ENCODE measurements at regions of chr1 and their contacts with region 1.

Region 1: DNA sequence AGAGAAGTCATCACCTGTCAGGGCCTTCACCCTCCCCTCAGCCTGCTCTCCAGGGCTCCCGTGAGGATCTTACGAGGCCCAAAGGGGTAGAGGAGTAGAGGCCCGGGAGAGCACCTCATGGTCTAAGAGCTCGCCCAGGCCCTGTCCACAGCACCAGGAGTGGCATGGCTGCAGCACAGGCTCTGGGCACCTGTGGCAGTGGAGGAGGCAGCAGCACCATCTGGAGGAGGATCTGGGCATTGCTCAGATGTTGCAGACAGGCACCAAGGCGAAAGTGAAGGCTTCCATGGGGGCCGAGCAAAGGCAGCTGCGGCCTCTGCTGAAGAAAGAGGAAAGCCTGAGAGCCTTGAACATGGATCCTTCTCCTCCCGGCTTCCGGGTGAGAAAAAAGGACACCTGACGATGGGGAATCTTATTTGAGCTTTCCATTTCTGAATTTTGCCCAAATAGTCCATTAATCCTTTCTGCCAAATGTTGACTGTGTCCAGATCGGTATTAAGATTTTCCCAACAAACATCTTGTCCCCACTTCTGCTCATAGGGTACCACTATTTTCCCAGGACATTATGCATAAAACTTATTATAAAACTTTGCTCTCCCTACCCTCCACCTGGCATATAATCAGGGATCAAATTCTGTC is 604.7 kb downstream of the PTPRC start:
- DNase-seq: peak; percentile 71
- H3K4me3 Mint-ChIP-seq: no peak overlapping the region
- H3K27ac Mint-ChIP-seq: no peak overlapping the region
- H3K4me1 Mint-ChIP-seq: peaks cover 6% of the 10 kb centered on the region
- H3K27me3 Mint-ChIP-seq: no peaks in the 10 kb centered on the region
- CTCF ChIP-seq: peak; percentile 90

Region 2: DNA sequence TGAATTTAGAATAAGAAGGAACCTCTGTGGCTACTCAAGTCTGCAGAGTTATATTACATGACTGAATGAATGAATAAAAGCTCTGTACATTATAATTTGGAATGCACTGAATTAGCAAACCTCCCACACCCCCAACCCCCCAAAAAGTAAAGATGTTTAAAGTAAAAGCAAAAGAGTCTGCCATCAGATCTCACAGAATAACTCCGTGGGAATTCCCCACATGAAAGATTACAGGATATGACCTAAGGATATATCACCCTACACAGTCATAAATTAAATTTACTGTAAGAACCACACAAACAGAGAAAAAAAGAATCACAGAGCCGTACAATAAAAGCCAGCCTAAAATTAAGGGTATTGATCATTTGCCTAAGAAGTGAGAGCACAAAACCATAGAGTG is 17.4 kb before region 1 on chr1:
- CTCF ChIA-PET with region 1: interaction called, 14 read pairs
- POLR2A ChIA-PET with region 1: no interaction called
- intact Hi-C with region 1: no loop called
- DNase-seq: peak; percentile 38
- H3K4me3 Mint-ChIP-seq: no peak overlapping the region
- H3K27ac Mint-ChIP-seq: no peak overlapping the region
- H3K4me1 Mint-ChIP-seq: peaks cover 10% of the 10 kb centered on the region
- H3K27me3 Mint-ChIP-seq: no peaks in the 10 kb centered on the region
- CTCF ChIP-seq: no peak